CD14-positive monocyte (primary cell): ENCODE measurements at regions of chr19 and their contacts with region 1.

Region 1: DNA sequence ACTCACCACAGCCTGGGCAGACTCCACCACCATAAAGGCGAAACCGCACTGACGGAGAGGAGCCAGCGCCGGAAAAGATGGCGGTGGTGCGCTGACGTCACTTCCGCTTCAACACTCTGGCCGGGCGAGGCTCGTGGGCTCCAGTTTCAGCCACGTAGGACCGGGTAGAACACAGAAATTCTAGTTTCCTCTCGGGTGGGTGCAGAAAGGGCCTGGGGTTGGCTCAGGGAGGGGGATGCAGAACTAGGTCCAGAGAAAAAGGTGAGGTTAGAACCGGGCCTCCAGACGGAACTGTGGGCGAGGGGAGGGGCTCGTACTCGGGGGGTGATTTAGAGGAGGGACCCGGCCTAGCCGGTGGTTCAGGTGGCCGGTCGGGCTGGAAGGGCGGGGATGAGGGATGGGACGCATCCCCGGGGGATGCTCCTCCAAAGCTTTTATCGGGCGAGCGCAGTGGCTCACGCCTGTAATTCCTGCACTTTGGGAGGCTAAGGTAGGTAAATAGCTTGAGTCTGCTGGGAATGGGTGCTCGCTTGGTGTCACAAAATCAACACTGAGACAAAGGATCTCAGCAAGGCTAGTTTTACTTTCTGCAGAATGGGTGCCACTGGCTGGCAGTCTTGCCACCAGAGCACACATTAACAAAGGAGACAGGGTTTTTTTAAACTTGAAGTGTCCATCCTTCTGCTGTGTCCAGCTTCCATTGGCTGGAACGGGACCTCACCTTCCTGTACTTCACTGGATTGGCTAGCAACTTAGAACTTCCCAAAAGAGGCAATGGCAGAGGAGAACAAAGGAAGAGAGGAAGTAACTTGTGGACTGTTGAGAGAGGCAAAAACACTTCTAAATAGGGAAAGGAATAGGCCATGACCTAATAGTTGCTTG is at the start of gene ZNF561:
- DNase-seq: peak; percentile 83 to 89 (median 87)
- H3K4me3 ChIP-seq: peak within 1 kb of the TSS; percentile 75 to 99 (median 96)
- H3K4me3 Mint-ChIP-seq: peak within 1 kb of the TSS; percentile 99 to 100
- H3K27ac ChIP-seq: peak within 1 kb of the TSS; percentile 93 to 95
- H3K27ac Mint-ChIP-seq: peak within 1 kb of the TSS; percentile 99 to 100 (median 100)
- H3K4me1 ChIP-seq: peaks cover 23 to 25% of the 10 kb centered on the region in 2 donors
- H3K4me1 Mint-ChIP-seq: peaks cover 22% of the 10 kb centered on the region
- H3K27me3 ChIP-seq: no peaks in the 10 kb centered on the region
- H3K27me3 Mint-ChIP-seq: no peaks in the 10 kb centered on the region
- CTCF ChIP-seq: no peak
- polyA plus RNA-seq, gene ZNF561: 11.0 to 14.3 (median 12.5) TPM

Region 2: DNA sequence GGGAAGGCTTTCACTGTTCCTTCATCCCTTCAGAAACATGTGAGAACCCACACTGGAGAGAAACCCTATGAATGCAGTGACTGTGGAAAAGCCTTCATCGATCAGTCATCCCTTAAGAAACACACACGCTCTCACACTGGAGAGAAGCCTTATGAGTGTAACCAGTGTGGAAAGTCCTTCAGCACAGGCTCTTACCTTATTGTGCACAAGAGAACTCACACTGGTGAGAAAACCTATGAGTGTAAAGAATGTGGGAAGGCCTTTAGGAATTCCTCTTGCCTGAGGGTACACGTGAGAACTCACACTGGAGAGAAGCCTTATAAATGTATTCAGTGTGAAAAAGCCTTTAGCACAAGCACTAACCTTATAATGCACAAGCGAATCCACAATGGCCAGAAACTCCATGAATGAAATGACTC is 240.0 kb before region 1 on chr19:
- intact Hi-C with region 1: no loop called
- DNase-seq: no peak
- H3K4me3 ChIP-seq: peak overlapping the region in 1 of 3 experiments; percentile 11
- H3K4me3 Mint-ChIP-seq: no peak overlapping the region
- H3K27ac ChIP-seq: no peak overlapping the region
- H3K27ac Mint-ChIP-seq: no peak overlapping the region
- H3K4me1 ChIP-seq: no peaks in the 10 kb centered on the region
- H3K4me1 Mint-ChIP-seq: no peaks in the 10 kb centered on the region
- H3K27me3 ChIP-seq: no peaks in the 10 kb centered on the region
- H3K27me3 Mint-ChIP-seq: no peaks in the 10 kb centered on the region
- CTCF ChIP-seq: no peak

Region 3: GRCh38 chr19:9570255-9570654 is 51.1 kb before region 1 on chr19:
- intact Hi-C with region 1: no loop called
- DNase-seq: no peak
- H3K4me3 ChIP-seq: no peak overlapping the region
- H3K4me3 Mint-ChIP-seq: no peak overlapping the region
- H3K27ac ChIP-seq: no peak overlapping the region
- H3K27ac Mint-ChIP-seq: no peak overlapping the region
- H3K4me1 ChIP-seq: no peaks in the 10 kb centered on the region
- H3K4me1 Mint-ChIP-seq: no peaks in the 10 kb centered on the region
- H3K27me3 ChIP-seq: no peaks in the 10 kb centered on the region
- H3K27me3 Mint-ChIP-seq: no peaks in the 10 kb centered on the region
- CTCF ChIP-seq: no peak

Region 4: GRCh38 chr19:9667898-9668297 is 46.5 kb after region 1 on chr19:
- intact Hi-C with region 1: no loop called
- DNase-seq: no peak
- H3K4me3 ChIP-seq: no peak overlapping the region
- H3K4me3 Mint-ChIP-seq: no peak overlapping the region
- H3K27ac ChIP-seq: no peak overlapping the region
- H3K27ac Mint-ChIP-seq: no peak overlapping the region
- H3K4me1 ChIP-seq: no peaks in the 10 kb centered on the region
- H3K4me1 Mint-ChIP-seq: peaks cover 5% of the 10 kb centered on the region
- H3K27me3 ChIP-seq: no peaks in the 10 kb centered on the region
- H3K27me3 Mint-ChIP-seq: no peaks in the 10 kb centered on the region
- CTCF ChIP-seq: no peak

Region 5: GRCh38 chr19:9768175-9769112 is 147.0 kb after region 1 on chr19 and contains the start of gene ZNF846:
- intact Hi-C with region 1: loop called in 1 of 2 experiments (anchors 1 kb)
- DNase-seq: peak; percentile 93 to 95 (median 94)
- H3K4me3 ChIP-seq: peak within 1 kb of the TSS; percentile 47 to 94 (median 70)
- H3K4me3 Mint-ChIP-seq: peak within 1 kb of the TSS; percentile 90 to 97
- H3K27ac ChIP-seq: peak within 1 kb of the TSS; percentile 87 to 99
- H3K27ac Mint-ChIP-seq: peak within 1 kb of the TSS; percentile 97 to 99 (median 99)
- H3K4me1 ChIP-seq: peaks cover 15 to 16% of the 10 kb centered on the region in 2 donors
- H3K4me1 Mint-ChIP-seq: peaks cover 8% of the 10 kb centered on the region
- H3K27me3 ChIP-seq: no peaks in the 10 kb centered on the region
- H3K27me3 Mint-ChIP-seq: peaks cover 0 to 3% (median 0%) of the 10 kb centered on the region in 3 donors
- CTCF ChIP-seq: no peak
- polyA plus RNA-seq, gene ZNF846: 2.5 to 6.9 (median 6.5) TPM